BJ (cell line): ENCODE measurements at regions of chr1 and their contacts with region 1.

Region 1: GRCh38 chr1:115807723-115808122 is 33.2 kb downstream of the NHLH2 start:
- DNase-seq: peak; percentile 18
- H3K4me3 ChIP-seq: no peak overlapping the region
- H3K27me3 ChIP-seq: no peaks in the 10 kb centered on the region; the same call in none of the 2 replicates
- CTCF ChIP-seq: peak; percentile 79

Region 2: GRCh38 chr1:115456441-115456961 is 351.2 kb before region 1 on chr1:
- CTCF ChIA-PET with region 1: no interaction called
- POLR2A ChIA-PET with region 1: no interaction called
- DNase-seq: peak; percentile 30
- H3K4me3 ChIP-seq: no peak overlapping the region
- H3K27me3 ChIP-seq: no peaks in the 10 kb centered on the region
- CTCF ChIP-seq: no peak

Region 3: GRCh38 chr1:115991909-115992308 is 184.2 kb after region 1 on chr1:
- CTCF ChIA-PET with region 1: interaction called, 10 read pairs
- POLR2A ChIA-PET with region 1: no interaction called
- DNase-seq: no peak
- H3K4me3 ChIP-seq: no peak overlapping the region
- H3K27me3 ChIP-seq: no peaks in the 10 kb centered on the region
- CTCF ChIP-seq: no peak